ENCODE measurements at regions of chr9 and their contacts with region 1.

Region 1: GRCh38 chr9:91361291-91362050 is at the start of gene AUH:
- DNase-seq: peak; percentile 91
- H3K4me3 Mint-ChIP-seq: peak within 1 kb of the TSS; percentile 96
- H3K27ac Mint-ChIP-seq: peak within 1 kb of the TSS; percentile 95
- H3K4me1 Mint-ChIP-seq: peaks cover 50% of the 10 kb centered on the region
- H3K27me3 Mint-ChIP-seq: no peaks in the 10 kb centered on the region
- total RNA-seq, gene AUH: 38.8 to 40.9 TPM

Region 2: GRCh38 chr9:91071185-91071990 is 290.1 kb before region 1 on chr9:
- CTCF ChIA-PET with region 1: interaction called, 4 read pairs
- POLR2A ChIA-PET with region 1: interaction called, 4 read pairs
- intact Hi-C with region 1: loop called (anchors 1 kb)
- DNase-seq: peak; percentile 88
- H3K4me3 Mint-ChIP-seq: peak overlapping the region; percentile 9
- H3K27ac Mint-ChIP-seq: peak overlapping the region; percentile 85
- H3K4me1 Mint-ChIP-seq: peaks cover 18% of the 10 kb centered on the region
- H3K27me3 Mint-ChIP-seq: peaks cover 7% of the 10 kb centered on the region

Region 3: DNA sequence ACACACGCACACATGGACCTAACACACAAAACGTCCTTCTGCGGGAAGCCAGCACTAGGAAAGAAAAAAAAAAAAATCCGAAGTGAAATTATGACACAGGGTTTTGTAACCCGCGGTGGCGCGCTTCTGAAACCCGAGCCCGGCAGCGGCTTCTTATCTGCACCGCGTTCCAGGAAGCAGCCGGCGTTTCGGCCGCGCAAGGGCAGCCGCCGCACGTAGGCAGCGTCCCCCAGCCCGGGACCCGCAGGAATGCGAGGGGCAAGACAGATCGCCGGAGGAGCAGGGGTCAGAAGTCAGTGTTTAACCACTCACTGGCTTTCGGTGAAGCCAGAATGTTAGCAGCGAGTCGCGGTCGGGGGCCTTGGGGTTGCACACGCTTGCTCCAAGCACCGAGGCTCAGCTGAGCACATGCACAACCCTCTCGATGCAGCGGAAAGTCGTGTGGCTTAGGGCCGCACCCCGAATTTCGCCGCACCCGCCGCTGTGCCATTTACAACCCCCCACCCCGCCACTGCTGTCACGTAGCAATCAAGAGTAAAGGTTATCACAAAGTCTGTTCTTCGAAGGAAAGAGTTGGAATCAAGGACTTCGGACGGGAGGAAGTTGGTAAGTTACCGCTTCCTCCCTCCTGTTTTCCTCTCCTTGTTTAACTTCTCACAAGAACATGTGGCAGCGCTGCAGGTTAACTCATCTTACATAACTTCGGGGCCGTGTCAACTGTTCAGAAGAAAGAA is 167.6 kb before region 1 on chr9:
- CTCF ChIA-PET with region 1: no interaction called
- POLR2A ChIA-PET with region 1: interaction called, 4 read pairs
- intact Hi-C with region 1: loop called (anchors 1 kb)
- DNase-seq: peak; percentile 92
- H3K4me3 Mint-ChIP-seq: peak overlapping the region; percentile 77
- H3K27ac Mint-ChIP-seq: peak overlapping the region; percentile 98
- H3K4me1 Mint-ChIP-seq: peaks cover 62% of the 10 kb centered on the region
- H3K27me3 Mint-ChIP-seq: no peaks in the 10 kb centered on the region

Region 4: DNA sequence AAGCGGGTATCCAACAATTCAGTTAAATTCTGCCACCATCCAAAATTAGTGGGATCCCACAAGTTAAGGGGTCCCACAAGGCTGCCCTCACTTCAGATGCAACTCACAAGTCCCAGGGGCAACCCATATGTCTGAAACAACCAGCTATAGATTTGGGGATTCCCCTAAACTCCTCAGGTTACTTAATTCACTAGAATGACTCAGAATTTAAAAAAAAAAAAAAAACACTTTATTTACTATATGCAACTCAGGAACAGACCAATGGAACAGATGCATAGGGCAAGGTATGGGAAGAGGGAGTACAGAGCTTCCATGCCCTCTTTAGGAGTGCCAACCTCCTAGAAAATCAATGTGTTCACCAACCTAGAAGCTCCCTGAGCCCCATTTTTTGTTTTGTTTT is 14.8 kb before region 1 on chr9:
- CTCF ChIA-PET with region 1: interaction called, 5 read pairs
- POLR2A ChIA-PET with region 1: interaction called, 8 read pairs
- intact Hi-C with region 1: loop called (anchors 1 kb)
- DNase-seq: no peak
- H3K4me3 Mint-ChIP-seq: no peak overlapping the region
- H3K27ac Mint-ChIP-seq: no peak overlapping the region
- H3K4me1 Mint-ChIP-seq: peaks cover 57% of the 10 kb centered on the region
- H3K27me3 Mint-ChIP-seq: no peaks in the 10 kb centered on the region

Region 5: DNA sequence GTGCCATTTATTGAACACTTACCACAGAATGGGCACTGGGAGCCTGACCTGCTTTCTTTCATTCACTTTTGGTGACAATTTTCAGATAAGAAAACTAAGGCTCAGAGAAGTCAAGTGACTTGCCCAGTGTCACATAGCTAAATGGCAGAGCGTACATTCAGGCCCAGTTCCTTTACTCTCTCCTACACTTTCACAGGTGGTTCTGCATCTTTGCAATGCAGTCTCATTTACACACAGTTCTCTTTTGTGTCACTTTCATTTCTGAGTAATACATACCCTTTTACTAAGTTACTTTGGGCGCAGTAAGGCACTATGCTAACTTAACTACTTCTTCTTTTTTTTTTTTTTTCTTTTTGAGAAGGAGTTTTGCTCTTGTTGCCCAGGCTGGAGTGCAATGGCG is 53.8 kb after region 1 on chr9:
- CTCF ChIA-PET with region 1: interaction called, 4 read pairs
- POLR2A ChIA-PET with region 1: interaction called, 83 read pairs
- intact Hi-C with region 1: loop called (anchors 1 kb)
- DNase-seq: peak; percentile 49
- H3K4me3 Mint-ChIP-seq: peak overlapping the region; percentile 26
- H3K27ac Mint-ChIP-seq: peak overlapping the region; percentile 86
- H3K4me1 Mint-ChIP-seq: peaks cover 80% of the 10 kb centered on the region
- H3K27me3 Mint-ChIP-seq: peaks cover 5% of the 10 kb centered on the region